WTC11 (cell line): ENCODE measurements at regions of chr15 and their contacts with region 1.

Region 1: GRCh38 chr15:75367913-75368688 is at the start of gene MAN2C1:
- DNase-seq: peak; percentile 95
- ATAC-seq: peak; percentile 90
- H3K4me3 Mint-ChIP-seq: peak within 1 kb of the TSS; percentile 90
- H3K27ac Mint-ChIP-seq: peak within 1 kb of the TSS; percentile 96
- H3K4me1 Mint-ChIP-seq: peaks cover 18% of the 10 kb centered on the region
- H3K27me3 Mint-ChIP-seq: no peaks in the 10 kb centered on the region
- CTCF ChIP-seq: no peak
- total RNA-seq, gene MAN2C1: 148 to 155 TPM (median 151 TPM) in 3 replicates

Region 2: GRCh38 chr15:75307778-75308391 is 60.2 kb before region 1 on chr15:
- CTCF ChIA-PET with region 1: interaction called, 11 read pairs
- POLR2A ChIA-PET with region 1: no interaction called
- DNase-seq: peak; percentile 90
- ATAC-seq: peak; percentile 100
- H3K4me3 Mint-ChIP-seq: no peak overlapping the region
- H3K27ac Mint-ChIP-seq: no peak overlapping the region
- H3K4me1 Mint-ChIP-seq: 0 out of 2 replicates have a peak, but pooled peaks cover 4% of the 10 kb centered on the region
- H3K27me3 Mint-ChIP-seq: peaks cover 20% of the 10 kb centered on the region
- CTCF ChIP-seq: peak; percentile 65

Region 3: DNA sequence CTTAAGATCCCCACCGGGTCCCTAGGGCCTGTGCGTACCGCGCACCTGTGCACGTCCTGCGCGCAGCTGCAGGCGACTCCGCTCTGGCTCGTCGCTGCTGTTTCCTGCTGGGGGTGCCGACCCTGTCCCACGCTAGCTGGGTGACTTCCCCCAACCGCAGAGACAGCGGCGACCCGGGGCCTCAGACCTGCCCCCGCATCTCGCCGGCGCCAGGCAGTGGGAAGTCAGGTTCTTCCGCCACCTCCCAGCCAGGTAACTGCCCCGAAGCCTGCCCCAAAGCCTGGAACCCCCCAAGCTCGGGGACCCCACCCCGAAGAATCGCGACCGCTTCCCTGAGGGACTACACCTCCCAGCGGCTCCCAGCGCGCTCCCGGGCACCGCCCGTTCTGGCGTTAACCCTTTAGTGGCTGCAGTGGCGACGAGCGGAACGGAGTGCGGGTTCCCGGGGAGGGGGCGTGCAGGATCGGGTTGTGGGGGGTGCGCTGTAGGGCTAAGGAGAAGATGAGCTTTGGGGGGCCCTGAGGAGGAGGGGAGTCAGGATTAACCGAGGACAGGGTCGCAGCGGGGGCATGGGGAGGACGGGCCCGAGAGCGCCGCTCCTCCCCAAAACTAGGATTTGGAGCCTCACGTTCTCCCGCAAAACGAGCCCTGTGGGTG is 20.8 kb before region 1 on chr15:
- CTCF ChIA-PET with region 1: interaction called, 25 read pairs
- POLR2A ChIA-PET with region 1: interaction called, 14 read pairs
- DNase-seq: peak; percentile 74
- ATAC-seq: peak; percentile 41
- H3K4me3 Mint-ChIP-seq: peak overlapping the region; percentile 84
- H3K27ac Mint-ChIP-seq: no peak overlapping the region
- H3K4me1 Mint-ChIP-seq: peaks cover 9% of the 10 kb centered on the region
- H3K27me3 Mint-ChIP-seq: peaks cover 35% of the 10 kb centered on the region
- CTCF ChIP-seq: no peak

Region 4: DNA sequence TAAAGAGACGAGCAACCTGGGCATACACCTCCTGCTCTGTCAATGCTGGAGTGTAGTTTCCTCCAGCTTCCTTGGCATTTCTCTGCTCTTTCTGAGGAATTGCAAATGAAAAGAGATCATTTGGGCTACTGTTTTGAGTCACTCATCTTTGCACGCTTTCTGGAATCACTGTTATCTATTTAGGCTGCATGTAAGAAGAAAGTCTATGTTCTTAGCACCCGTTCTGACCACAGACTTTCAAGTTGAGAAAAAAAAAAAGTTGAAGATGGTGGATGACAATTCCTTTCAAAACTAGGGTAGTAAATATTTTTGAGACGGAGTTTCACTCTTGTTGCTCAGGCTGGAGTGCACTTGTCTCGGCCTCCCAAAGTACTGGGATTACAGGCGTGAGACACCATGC is 42.1 kb after region 1 on chr15:
- CTCF ChIA-PET with region 1: no interaction called
- POLR2A ChIA-PET with region 1: no interaction called
- DNase-seq: no peak
- ATAC-seq: no peak
- H3K4me3 Mint-ChIP-seq: no peak overlapping the region
- H3K27ac Mint-ChIP-seq: no peak overlapping the region
- H3K4me1 Mint-ChIP-seq: no peaks in the 10 kb centered on the region
- H3K27me3 Mint-ChIP-seq: no peaks in the 10 kb centered on the region
- CTCF ChIP-seq: no peak

Region 5: GRCh38 chr15:75453703-75454470 is 85.8 kb after region 1 on chr15:
- CTCF ChIA-PET with region 1: interaction called, 40 read pairs
- POLR2A ChIA-PET with region 1: interaction called, 33 read pairs
- DNase-seq: peak; percentile 97
- ATAC-seq: peak; percentile 21
- H3K4me3 Mint-ChIP-seq: peak overlapping the region; percentile 90
- H3K27ac Mint-ChIP-seq: peak overlapping the region; percentile 100
- H3K4me1 Mint-ChIP-seq: peaks cover 17% of the 10 kb centered on the region
- H3K27me3 Mint-ChIP-seq: no peaks in the 10 kb centered on the region; the same call in 1 of the 2 replicates
- CTCF ChIP-seq: no peak

Region 6: GRCh38 chr15:75647370-75648155 is 279.5 kb after region 1 on chr15 and contains the start of gene SNX33:
- CTCF ChIA-PET with region 1: interaction called, 14 read pairs
- POLR2A ChIA-PET with region 1: interaction called, 4 read pairs
- DNase-seq: peak; percentile 79
- ATAC-seq: peak; percentile 71
- H3K4me3 Mint-ChIP-seq: peak within 1 kb of the TSS; percentile 91
- H3K27ac Mint-ChIP-seq: peak within 1 kb of the TSS; percentile 98
- H3K4me1 Mint-ChIP-seq: peaks cover 51% of the 10 kb centered on the region
- H3K27me3 Mint-ChIP-seq: peaks cover 23% of the 10 kb centered on the region
- CTCF ChIP-seq: no peak; the same call in 1 of the 2 replicates
- total RNA-seq, gene SNX33: 17.8 to 19.8 TPM (median 18.9 TPM) in 3 replicates

Region 7: GRCh38 chr15:75672646-75673425 is 304.7 kb after region 1 on chr15:
- CTCF ChIA-PET with region 1: interaction called, 10 read pairs
- POLR2A ChIA-PET with region 1: no interaction called
- DNase-seq: no peak
- ATAC-seq: peak; percentile 39
- H3K4me3 Mint-ChIP-seq: no peak overlapping the region
- H3K27ac Mint-ChIP-seq: peak overlapping the region; percentile 89; the same call in 1 of the 2 replicates
- H3K4me1 Mint-ChIP-seq: peaks cover 20% of the 10 kb centered on the region
- H3K27me3 Mint-ChIP-seq: no peaks in the 10 kb centered on the region
- CTCF ChIP-seq: no peak

Region 8: GRCh38 chr15:75694241-75695182 is 326.4 kb after region 1 on chr15:
- CTCF ChIA-PET with region 1: interaction called, 10 read pairs
- POLR2A ChIA-PET with region 1: no interaction called
- DNase-seq: peak; percentile 63
- ATAC-seq: peak; percentile 62
- H3K4me3 Mint-ChIP-seq: no peak overlapping the region
- H3K27ac Mint-ChIP-seq: peak overlapping the region; percentile 63; the same call in 1 of the 2 replicates
- H3K4me1 Mint-ChIP-seq: peaks cover 22% of the 10 kb centered on the region
- H3K27me3 Mint-ChIP-seq: peaks cover 4% of the 10 kb centered on the region; the same call in 1 of the 2 replicates
- CTCF ChIP-seq: no peak